ENCODE measurements at regions of chr1 and their contacts with region 1.

Region 1: GRCh38 chr1:206982216-206982615 is 12.0 kb upstream of the FCAMR start:
- DNase-seq: no peak
- ATAC-seq: peak; percentile 59

Region 2: GRCh38 chr1:206489980-206490770 is 492.0 kb before region 1 on chr1:
- intact Hi-C with region 1: loop called (anchors 10 kb)
- DNase-seq: peak; percentile 88
- ATAC-seq: peak; percentile 89

Region 3: DNA sequence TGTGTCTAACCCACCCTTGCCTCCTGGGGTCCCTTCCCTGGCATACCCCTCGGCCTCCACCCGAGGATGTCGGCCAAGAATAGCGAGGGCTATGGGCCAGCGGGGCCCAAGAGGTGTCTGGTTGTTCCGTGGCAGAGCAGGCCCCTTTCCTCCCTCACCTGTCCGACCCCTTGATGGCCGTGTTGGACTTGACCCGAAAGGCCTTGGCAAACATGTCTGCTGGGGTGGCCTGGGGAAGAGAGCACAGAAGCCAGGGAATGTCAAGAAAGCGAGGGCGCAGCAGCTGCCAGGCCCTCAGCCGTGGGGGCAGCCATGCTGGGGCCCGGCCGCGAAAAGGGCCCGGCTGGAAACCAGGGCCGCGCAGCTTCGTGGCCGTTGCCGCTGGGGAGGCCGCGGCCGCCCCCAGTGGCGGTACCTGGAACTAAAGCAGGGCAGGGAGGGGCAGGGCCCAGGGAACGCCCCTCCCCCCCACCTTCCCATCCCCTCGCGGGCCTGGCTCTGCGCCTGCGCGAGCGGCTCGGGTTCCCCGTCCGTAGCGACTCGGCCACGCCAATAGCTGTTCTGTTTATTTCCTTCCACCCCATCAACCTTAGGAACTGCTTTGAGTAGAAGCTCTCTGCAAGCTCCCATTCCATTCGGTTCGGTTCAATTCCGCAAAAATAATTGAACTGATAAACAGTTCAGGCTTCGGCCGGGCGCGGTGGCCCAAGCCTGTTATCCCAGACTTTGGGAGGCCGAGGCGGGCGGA is 369.9 kb before region 1 on chr1 and contains the start of gene EIF2D:
- intact Hi-C with region 1: loop called (anchors 5 kb)
- DNase-seq: peak; percentile 97
- ATAC-seq: peak; percentile 100
- total RNA-seq, gene EIF2D: 26.0 TPM

Region 4: GRCh38 chr1:206725109-206725963 is 256.9 kb before region 1 on chr1:
- intact Hi-C with region 1: no loop called
- DNase-seq: no peak
- ATAC-seq: no peak

Region 5: GRCh38 chr1:206925106-206925736 is 57.0 kb before region 1 on chr1:
- intact Hi-C with region 1: loop called (anchors 10 kb)
- DNase-seq: peak; percentile 88
- ATAC-seq: peak; percentile 30

Region 6: DNA sequence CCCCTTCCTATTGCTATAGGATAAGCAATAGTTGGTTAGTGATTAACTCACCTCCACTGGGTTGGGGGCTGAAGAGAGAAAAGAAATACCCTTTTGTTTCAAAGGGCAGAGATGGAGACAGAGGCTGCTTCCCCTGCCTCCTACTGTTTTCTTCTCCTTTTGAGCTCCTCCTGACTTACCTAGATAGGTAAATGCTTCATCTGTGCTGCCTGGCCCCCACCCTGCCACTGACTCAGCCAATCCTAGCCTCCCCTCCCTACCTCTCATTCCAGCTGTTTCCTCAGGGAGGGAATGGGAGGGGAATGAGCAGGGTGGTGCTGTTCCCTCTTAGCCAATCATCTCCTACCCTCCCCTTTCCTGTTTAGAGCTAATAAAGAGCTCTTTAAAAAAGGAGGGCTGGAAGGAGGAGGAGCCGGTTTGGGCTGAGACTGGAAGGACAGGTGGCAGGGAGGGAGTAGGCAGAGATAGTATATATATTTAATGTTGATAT is 50.4 kb after region 1 on chr1 and contains the start of gene C1orf116:
- intact Hi-C with region 1: no loop called
- DNase-seq: no peak
- ATAC-seq: no peak
- total RNA-seq, gene C1orf116: 1.2 TPM